ENCODE measurements at regions of chr2 and their contacts with region 1.

Region 1: DNA sequence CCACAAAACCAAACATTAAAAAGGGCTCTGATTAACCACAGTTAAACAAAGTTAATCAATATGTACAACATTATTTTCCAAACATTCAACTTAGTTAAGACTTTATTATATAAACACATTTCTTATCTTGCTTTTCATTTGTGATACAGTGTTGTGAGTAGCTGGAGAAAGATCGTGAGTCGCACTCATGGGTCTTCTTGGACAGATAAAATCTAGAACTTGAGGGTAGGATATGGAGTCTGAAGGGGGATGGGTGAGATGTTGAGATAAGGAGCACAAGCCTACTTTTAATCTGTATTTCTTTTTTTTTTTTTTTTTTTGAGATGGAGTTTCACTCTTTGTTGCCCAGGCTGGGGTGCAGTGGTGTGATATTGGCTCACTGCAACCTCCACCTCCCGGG is 22.6 kb upstream of the TMEM214 start:
- DNase-seq: no peak
- H3K4me3 ChIP-seq: no peak overlapping the region
- H3K27ac ChIP-seq: peak overlapping the region; percentile 97
- H3K4me1 ChIP-seq: peaks cover 46% of the 10 kb centered on the region
- H3K27me3 ChIP-seq: no peaks in the 10 kb centered on the region
- CTCF ChIP-seq: no peak

Region 2: DNA sequence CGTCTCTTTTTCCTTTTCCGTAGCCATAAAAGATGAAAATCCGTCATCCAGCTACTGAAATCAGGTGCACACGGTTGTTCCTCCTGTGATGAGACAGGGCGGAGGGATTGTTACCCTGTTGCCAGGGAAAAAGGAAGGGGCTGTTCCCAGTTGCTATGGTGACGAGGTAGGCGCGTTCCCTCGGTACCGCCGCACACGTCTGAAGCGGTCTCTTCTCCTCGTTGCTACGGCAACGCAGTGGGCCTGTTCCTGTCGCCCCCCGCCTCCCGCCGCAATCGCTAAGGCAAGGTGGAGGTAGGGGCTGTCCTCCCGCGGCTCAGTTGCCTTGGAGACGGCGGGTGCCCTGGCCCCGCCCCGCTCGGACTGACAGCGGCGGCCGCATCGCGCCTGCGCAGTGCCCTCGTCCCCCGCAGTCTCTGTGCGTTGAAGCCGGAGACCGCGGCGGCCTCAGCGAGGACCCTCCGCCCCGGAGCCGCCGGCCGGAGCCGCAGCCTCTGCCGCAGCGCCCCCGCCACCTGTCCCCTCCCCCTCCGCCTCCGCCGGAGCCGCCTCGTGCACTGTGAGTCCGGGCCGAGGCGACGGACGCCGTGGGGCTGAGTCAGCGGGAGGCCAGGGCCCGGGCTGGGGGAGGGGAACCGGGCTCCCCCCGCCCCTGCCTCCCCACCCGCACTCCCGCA is 39.8 kb before region 1 on chr2 and contains the start of gene MAPRE3:
- CTCF ChIA-PET with region 1: interaction called, 16 read pairs
- POLR2A ChIA-PET with region 1: no interaction called
- intact Hi-C with region 1: loop called (anchors 2 kb)
- DNase-seq: peak; percentile 73 to 83
- H3K4me3 ChIP-seq: peak within 1 kb of the TSS; percentile 63
- H3K27ac ChIP-seq: no peak within 1 kb of the TSS
- H3K4me1 ChIP-seq: peaks cover 45% of the 10 kb centered on the region
- H3K27me3 ChIP-seq: no peaks in the 10 kb centered on the region
- CTCF ChIP-seq: no peak
- total RNA-seq, gene MAPRE3: 17.1 and 25.2 TPM in 2 replicates

Region 3: DNA sequence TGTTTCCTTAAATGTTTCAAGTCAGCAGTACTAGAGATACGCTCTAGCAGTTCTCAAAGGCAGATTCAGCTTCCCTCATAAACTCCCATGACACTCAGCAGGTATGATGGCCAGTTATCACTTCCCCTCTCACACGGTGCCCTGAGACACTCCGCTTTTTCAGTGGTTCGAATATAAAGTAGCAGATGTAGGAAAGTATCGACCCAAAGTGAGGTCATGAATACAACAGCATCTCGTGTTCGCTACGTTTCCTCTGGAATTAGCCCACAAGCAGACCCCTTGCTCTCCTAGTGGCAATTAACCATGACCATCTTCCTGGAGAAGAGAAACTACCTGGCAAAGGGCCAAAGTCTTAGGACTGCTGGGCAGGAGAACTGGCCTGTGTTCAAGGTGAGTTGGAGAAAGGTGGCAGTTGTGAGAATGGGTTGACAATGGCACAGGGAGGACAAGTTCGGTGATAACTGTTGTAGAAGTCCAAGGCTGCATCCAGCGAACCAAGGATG is 32.1 kb after region 1 on chr2:
- CTCF ChIA-PET with region 1: no interaction called
- POLR2A ChIA-PET with region 1: no interaction called
- intact Hi-C with region 1: no loop called
- DNase-seq: no peak
- H3K4me3 ChIP-seq: no peak overlapping the region
- H3K27ac ChIP-seq: no peak overlapping the region
- H3K4me1 ChIP-seq: no peaks in the 10 kb centered on the region
- H3K27me3 ChIP-seq: no peaks in the 10 kb centered on the region
- CTCF ChIP-seq: no peak

Measured in PC-9 (cell line).